ENCODE measurements at regions of chr9 and their contacts with region 1.

Region 1: GRCh38 chr9:35618854-35619799 is 914 bp upstream of the CD72 start:
- H3K4me3 ChIP-seq: no peak overlapping the region
- H3K27ac ChIP-seq: no peak overlapping the region
- H3K4me1 ChIP-seq: no peaks in the 10 kb centered on the region
- CTCF ChIP-seq: no peak

Region 2: DNA sequence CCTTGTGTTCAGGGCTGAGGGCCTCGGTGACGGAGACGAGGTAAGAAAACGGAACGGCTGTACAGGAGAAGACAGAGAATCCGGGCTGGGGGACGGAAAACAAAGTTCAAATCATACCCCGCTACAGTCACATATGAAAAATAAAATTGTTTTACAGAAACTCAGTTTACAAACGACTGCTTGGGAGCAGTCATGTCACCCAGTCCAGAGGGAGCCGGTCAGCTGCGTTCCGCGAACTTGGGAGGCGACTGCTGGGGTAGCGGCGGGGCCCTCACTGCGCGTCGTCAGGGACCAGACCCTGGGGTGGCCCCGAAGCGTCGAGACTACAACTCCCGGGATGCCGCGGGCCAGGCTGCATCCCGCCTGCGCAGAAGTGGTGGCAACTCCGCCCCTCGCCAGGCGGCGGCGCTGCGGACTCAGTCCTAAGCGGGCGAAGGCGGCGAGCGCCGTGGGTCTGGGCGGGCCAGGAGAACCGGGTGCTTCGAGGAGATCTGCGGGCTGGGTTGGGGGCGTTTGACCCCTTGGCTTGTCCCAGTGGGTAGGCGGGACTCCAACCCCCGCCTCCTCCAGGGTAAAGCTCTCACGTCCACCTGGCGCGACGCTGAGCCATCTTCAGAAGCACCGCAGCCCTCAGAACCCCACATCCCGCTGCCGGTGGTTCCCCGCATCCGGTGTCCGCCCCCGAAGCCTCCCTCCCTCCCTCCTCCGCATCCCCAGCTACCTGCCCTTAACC is 27.6 kb after region 1 on chr9:
- CTCF ChIA-PET with region 1: interaction called, 14 read pairs
- POLR2A ChIA-PET with region 1: no interaction called
- H3K4me3 ChIP-seq: peak overlapping the region; percentile 62
- H3K27ac ChIP-seq: peak overlapping the region; percentile 51
- H3K4me1 ChIP-seq: no peaks in the 10 kb centered on the region
- CTCF ChIP-seq: peak; percentile 94

Measured in HEK293 (cell line).